SK-N-SH (cell line): ENCODE measurements at regions of chr2 and their contacts with region 1.

Region 1: DNA sequence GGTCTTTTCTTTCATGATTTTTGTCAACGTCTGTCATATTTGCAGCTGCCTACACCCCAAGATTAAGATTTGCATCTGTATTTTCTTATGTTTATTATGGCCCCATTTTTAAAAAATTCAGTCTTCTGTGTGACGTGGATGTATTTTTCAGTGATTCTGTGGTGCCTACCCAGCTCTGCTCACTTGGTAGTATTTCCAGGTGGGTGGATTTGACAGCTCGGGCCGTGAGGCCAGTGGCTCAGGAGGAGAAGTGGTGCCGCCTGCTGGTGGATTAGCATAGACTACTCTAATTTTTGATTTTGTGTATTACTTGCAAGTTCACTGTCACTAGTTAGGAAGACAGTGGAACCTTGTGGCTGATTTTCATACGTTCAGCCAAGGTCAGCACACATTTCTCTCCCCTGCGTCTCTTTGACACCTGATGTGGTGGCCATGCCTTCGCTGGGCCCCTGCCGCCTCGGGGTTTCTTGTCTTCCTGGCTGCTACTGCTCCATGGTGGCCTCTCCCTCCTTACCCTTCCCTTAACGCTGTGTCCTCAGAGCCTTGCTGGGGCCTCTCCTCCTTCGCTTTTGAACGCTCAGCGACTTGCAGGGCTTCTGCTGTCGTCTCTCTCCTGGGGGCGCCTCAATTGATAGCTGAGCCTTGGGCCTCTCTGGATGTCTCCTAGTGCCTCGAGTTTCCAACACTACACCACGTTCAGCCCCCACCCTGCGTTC is 89.3 kb downstream of the DGKD start:
- DNase-seq: peak; percentile 92
- H3K4me3 ChIP-seq: no peak overlapping the region; a peak in 1 of 4 replicates
- H3K27ac ChIP-seq: no peak overlapping the region
- H3K4me1 ChIP-seq: no peaks in the 10 kb centered on the region
- H3K27me3 ChIP-seq: no peaks in the 10 kb centered on the region
- CTCF ChIP-seq: peak; percentile 90
- EP300 ChIP-seq: no peak
- RAD21 ChIP-seq: peak; percentile 93

Region 2: DNA sequence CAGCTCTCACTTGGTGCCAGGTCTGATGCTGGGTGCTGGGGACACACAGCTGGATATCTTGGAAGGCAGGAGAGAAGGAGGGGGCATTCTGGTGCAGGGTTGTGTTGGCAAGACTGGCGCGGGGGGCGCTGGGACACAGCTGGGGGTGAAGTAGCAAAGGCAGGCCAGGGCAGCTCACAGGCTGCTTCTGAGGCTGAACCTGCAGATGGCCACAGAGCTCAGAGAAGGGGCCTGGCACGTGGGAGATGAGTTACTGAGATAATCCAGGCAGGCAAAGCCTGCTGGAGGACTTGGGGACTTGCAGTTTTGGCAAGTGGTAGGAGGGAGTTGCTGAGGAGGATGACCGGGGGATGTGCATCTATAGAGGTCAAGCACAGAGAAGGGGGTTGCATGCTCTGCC is 105.6 kb before region 1 on chr2:
- CTCF ChIA-PET with region 1: interaction called, 18 read pairs
- POLR2A ChIA-PET with region 1: no interaction called
- DNase-seq: peak; percentile 63
- H3K4me3 ChIP-seq: no peak overlapping the region
- H3K27ac ChIP-seq: no peak overlapping the region
- H3K4me1 ChIP-seq: peaks cover 0 to 9% of the 10 kb centered on the region in 2 experiments; a peak in 1 of 4 replicates
- H3K27me3 ChIP-seq: no peaks in the 10 kb centered on the region
- CTCF ChIP-seq: no peak
- EP300 ChIP-seq: no peak
- RAD21 ChIP-seq: peak; percentile 36

Region 3: GRCh38 chr2:233385489-233386044 is 58.1 kb before region 1 on chr2:
- CTCF ChIA-PET with region 1: interaction called, 21 read pairs
- POLR2A ChIA-PET with region 1: no interaction called
- DNase-seq: no peak
- H3K4me3 ChIP-seq: no peak overlapping the region
- H3K27ac ChIP-seq: no peak overlapping the region
- H3K4me1 ChIP-seq: peaks cover 20 to 41% of the 10 kb centered on the region in 2 experiments
- H3K27me3 ChIP-seq: no peaks in the 10 kb centered on the region
- CTCF ChIP-seq: no peak
- EP300 ChIP-seq: no peak
- RAD21 ChIP-seq: no peak

Region 4: GRCh38 chr2:233426619-233427342 is 16.8 kb before region 1 on chr2:
- CTCF ChIA-PET with region 1: interaction called, 29 read pairs
- POLR2A ChIA-PET with region 1: no interaction called
- DNase-seq: no peak
- H3K4me3 ChIP-seq: no peak overlapping the region
- H3K27ac ChIP-seq: peak overlapping the region in 1 of 2 experiments; percentile 13; a peak in 1 of 4 replicates
- H3K4me1 ChIP-seq: peaks cover 0 to 39% of the 10 kb centered on the region in 2 experiments; a peak in 3 of 4 replicates
- H3K27me3 ChIP-seq: no peaks in the 10 kb centered on the region
- CTCF ChIP-seq: no peak
- EP300 ChIP-seq: no peak
- RAD21 ChIP-seq: no peak